Heart right ventricle (tissue), 16 donors: ENCODE measurements at regions of chr4 and their contacts with region 1.

Region 1: DNA sequence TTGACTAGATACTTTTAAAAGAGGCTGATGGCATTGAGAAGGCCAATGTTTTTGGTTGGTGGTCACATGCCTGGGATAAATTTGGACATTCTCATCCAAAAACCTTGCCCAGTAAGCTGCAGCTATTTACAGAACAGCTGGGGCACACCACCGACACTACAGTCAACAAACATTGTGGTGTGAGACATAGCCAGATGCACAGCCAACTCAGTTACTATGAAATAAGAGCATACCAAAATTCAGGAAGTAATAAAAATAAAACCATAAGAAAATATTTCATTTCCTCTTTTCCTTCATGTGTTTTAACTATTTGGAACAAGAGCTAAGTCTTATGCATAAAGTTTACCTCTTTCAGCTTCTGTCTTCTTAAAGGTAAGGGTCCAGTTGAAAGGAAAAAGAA is 8.8 kb downstream of the PPM1K start:
- DNase-seq: no peak
- ATAC-seq: peak in 1 of 8 donors; percentile 48
- H3K4me3 ChIP-seq: peak overlapping the region in 1 of 10 donors; percentile 11
- H3K27ac ChIP-seq: peak overlapping the region in 2 of 10 donors; percentile 1 to 13
- H3K4me1 ChIP-seq: peaks cover 0 to 52% (median 27%) of the 10 kb centered on the region in 9 donors
- H3K27me3 ChIP-seq: no peaks in the 10 kb centered on the region
- CTCF ChIP-seq: no peak

Region 2: DNA sequence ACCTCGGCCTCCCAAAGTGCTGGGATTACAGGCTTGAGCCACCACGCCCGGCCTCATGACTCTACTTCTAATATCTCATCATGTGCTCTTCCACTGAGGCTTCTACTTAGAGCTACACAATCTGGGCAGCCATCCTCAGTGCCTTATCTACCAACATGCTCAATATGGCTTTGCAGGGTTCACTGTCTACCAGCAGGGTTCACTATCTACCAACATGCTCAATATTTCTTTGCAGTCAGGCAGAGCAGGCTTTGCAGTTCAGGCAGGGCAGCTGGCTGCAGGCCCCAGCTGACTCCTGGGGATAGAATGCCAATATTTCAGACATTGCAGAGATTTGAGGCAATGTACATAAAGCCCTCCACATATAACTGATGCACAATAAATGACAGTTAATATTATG is 220.6 kb before region 1 on chr4:
- intact Hi-C with region 1: loop called in 1 of 10 experiments (anchors 5 kb)
- DNase-seq: peak in 1 of 2 donors; percentile 29
- ATAC-seq: peak; percentile 51 to 81 (median 74)
- H3K4me3 ChIP-seq: no peak overlapping the region
- H3K27ac ChIP-seq: no peak overlapping the region
- H3K4me1 ChIP-seq: peaks cover 0 to 6% (median 0%) of the 10 kb centered on the region in 9 donors
- H3K27me3 ChIP-seq: no peaks in the 10 kb centered on the region
- CTCF ChIP-seq: peak in 6 of 9 donors; percentile 28 to 52 (median 43)